Activated CD4-positive, alpha-beta T cell treated with anti-CD3 and anti-CD28 coated beads, Interleukin-2, amount 10 ng/mL, durations not matched to agents 7 days and 5 days (primary cell): ENCODE measurements at regions of chr1 and their contacts with region 1.

Region 1: GRCh38 chr1:27321813-27322577 is at the start of gene TMEM222:
- DNase-seq: peak; percentile 97
- H3K4me3 Mint-ChIP-seq: peak within 1 kb of the TSS; percentile 97
- H3K27ac Mint-ChIP-seq: peak within 1 kb of the TSS; percentile 92
- H3K4me1 Mint-ChIP-seq: peaks cover 44% of the 10 kb centered on the region
- H3K27me3 Mint-ChIP-seq: peaks cover 3% of the 10 kb centered on the region
- total RNA-seq, gene TMEM222: 38.4 to 40.2 TPM

Region 2: GRCh38 chr1:27300341-27301051 is 21.5 kb before region 1 on chr1:
- CTCF ChIA-PET with region 1: interaction called, 14 read pairs
- POLR2A ChIA-PET with region 1: no interaction called
- DNase-seq: peak; percentile 75
- H3K4me3 Mint-ChIP-seq: no peak overlapping the region
- H3K27ac Mint-ChIP-seq: no peak overlapping the region
- H3K4me1 Mint-ChIP-seq: peaks cover 5% of the 10 kb centered on the region
- H3K27me3 Mint-ChIP-seq: no peaks in the 10 kb centered on the region

Region 3: GRCh38 chr1:27332536-27333281 is 10.7 kb after region 1 on chr1:
- CTCF ChIA-PET with region 1: interaction called, 21 read pairs
- POLR2A ChIA-PET with region 1: interaction called, 6 read pairs
- DNase-seq: peak; percentile 60
- H3K4me3 Mint-ChIP-seq: no peak overlapping the region
- H3K27ac Mint-ChIP-seq: peak overlapping the region; percentile 60
- H3K4me1 Mint-ChIP-seq: peaks cover 26% of the 10 kb centered on the region
- H3K27me3 Mint-ChIP-seq: no peaks in the 10 kb centered on the region

Region 4: DNA sequence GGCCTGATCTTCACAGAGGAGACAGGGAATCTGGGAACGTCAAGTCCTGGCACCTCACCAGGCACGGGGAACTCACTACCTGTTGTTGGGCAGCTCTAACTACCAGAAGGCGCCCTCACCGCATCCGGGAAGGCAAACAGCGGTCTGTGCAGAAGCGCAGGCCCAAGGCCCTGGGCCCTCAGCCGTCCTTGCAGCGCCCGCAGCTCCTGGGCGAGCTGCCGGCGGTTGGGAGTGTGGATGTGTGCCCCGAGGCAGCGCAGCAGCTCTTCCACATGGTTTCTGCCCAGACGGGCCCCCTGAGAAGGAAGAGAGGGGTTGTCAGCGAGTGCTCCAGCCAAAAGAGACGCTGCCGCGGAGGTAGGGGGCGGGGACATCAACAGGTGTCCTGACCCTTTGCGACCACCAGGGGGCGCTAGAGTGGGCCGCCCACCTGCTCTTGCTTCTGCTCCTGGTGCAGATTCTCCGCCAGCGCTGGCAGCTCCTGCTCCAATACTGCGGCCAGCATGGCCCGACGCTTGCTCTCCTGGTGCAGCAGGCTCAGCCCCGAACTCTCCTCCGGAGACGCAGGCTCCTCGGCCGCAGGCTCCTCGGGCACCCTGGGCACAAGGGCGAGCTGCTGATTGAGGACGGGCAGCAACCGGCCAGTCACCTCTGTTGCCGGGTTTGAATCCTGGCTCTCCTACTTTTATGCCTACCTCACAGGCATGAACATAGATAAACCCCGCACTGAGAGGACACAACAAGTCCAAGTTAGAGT is 35.5 kb after region 1 on chr1:
- CTCF ChIA-PET with region 1: interaction called, 11 read pairs
- POLR2A ChIA-PET with region 1: no interaction called
- DNase-seq: peak; percentile 83
- H3K4me3 Mint-ChIP-seq: peak overlapping the region; percentile 72
- H3K27ac Mint-ChIP-seq: peak overlapping the region; percentile 93
- H3K4me1 Mint-ChIP-seq: peaks cover 43% of the 10 kb centered on the region
- H3K27me3 Mint-ChIP-seq: peaks cover 3% of the 10 kb centered on the region

Region 5: DNA sequence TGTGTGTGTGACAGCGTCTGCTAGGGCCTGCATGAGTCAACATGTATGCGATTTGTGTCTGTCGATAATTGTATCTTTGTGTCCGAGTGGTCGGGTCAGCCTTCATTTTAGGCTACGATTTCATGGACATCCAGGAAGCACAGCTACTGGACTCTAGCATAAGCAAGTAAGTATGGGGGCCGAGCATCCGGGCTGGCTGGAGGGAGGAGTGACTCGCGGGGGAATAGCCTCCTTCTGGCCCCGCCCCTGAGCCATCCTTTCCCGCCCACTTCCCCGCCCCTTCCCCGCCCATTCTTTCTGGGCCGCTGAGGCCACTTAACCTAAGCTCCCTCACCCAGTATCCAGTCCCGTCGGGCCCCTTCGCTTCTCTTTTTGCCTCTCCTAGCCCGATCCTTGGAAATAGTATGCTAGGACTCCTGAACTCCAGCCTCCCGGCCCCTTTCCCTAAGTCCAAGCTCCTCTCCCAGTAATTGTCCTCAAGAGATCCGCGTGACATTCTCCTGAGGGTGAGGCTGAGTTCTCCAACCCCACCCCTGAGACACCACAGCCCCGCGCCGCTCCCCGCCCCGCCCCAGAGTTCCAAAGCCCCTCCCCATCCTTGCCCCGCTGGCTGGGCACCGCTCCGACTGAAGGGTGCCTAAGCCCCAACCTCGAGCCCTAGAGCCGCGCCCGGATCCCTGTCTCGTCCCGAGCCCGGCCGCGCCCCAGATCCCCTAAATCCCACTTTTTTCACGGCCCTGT is 43.5 kb after region 1 on chr1:
- CTCF ChIA-PET with region 1: interaction called, 15 read pairs
- POLR2A ChIA-PET with region 1: no interaction called
- DNase-seq: peak; percentile 81
- H3K4me3 Mint-ChIP-seq: peak overlapping the region; percentile 77
- H3K27ac Mint-ChIP-seq: peak overlapping the region; percentile 82
- H3K4me1 Mint-ChIP-seq: peaks cover 50% of the 10 kb centered on the region
- H3K27me3 Mint-ChIP-seq: no peaks in the 10 kb centered on the region